Activated T-helper 1 cell treated with anti-CD3 and anti-CD28 coated beads, Interleukin-12 subunit alpha, Interleukin-12 subunit beta, Interleukin-2, Interleukin-4 antibody, amounts not matched to agents 30 ng/mL and 10 ng/mL and 1 ng/mL, durations not matched to agents 14 hours and 24 hours and 36 hours (primary cell): ENCODE measurements at regions of chr10 and their contacts with region 1.

Region 1: DNA sequence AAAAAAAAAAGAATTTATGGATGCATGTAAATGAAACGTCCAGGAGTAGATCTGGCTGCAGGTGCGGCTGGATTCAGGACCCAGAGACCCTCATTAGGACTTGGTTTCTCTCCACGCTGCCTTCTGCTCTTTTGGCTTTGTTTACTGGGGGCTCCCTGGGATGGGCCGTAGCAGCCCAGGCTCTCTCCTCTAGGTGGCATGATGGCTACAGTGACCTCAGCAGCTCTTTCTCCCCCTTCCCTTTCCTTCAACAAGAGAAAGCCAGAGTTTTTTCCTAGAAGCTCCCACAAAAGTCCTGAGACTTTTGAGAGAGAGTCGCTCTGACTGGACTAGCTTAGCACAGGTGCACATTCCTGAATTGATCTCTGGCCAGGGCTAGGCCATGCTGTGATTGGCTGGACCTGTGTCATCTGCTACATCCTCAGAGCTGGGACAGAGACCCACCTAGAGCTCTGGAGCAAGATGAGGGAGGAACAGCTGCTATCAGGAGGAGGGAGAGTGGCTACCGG is 67.8 kb upstream of the PDCD4 start:
- DNase-seq: no peak
- H3K4me3 Mint-ChIP-seq: peak overlapping the region; percentile 56
- H3K27ac Mint-ChIP-seq: peak overlapping the region; percentile 51
- H3K4me1 Mint-ChIP-seq: peaks cover 41% of the 10 kb centered on the region
- H3K27me3 Mint-ChIP-seq: no peaks in the 10 kb centered on the region

Region 2: DNA sequence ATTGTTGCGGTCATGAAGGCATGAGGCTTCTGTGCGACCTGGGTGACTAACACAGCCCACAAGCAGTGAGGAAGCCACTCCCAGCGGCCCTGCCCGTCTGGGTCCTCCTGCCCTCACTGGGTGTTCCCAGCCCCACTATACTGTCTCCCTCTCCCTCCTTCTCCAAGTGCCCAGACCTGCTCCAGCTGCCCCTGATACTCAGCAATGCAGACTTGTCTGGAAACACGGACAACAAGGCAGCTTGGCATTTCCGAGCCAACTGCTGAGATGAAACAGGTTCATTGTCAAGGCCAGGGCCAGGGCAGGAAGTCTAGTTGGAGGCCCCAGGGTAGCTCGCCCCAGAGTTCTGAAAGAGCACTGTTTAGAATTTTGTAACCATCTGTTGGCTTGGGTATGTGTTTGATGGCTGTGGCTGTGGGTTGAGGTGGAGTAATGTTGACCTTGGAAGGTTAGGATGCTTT is 64.0 kb before region 1 on chr10:
- intact Hi-C with region 1: no loop called
- DNase-seq: no peak
- H3K4me3 Mint-ChIP-seq: no peak overlapping the region
- H3K27ac Mint-ChIP-seq: no peak overlapping the region
- H3K4me1 Mint-ChIP-seq: peaks cover 31% of the 10 kb centered on the region
- H3K27me3 Mint-ChIP-seq: peaks cover 9% of the 10 kb centered on the region

Region 3: GRCh38 chr10:110758898-110759297 is 45.0 kb before region 1 on chr10:
- intact Hi-C with region 1: no loop called
- DNase-seq: no peak
- H3K4me3 Mint-ChIP-seq: no peak overlapping the region
- H3K27ac Mint-ChIP-seq: no peak overlapping the region
- H3K4me1 Mint-ChIP-seq: peaks cover 10% of the 10 kb centered on the region
- H3K27me3 Mint-ChIP-seq: peaks cover 5% of the 10 kb centered on the region

Region 4: GRCh38 chr10:110772454-110773025 is 31.3 kb before region 1 on chr10:
- intact Hi-C with region 1: no loop called
- DNase-seq: no peak
- H3K4me3 Mint-ChIP-seq: no peak overlapping the region
- H3K27ac Mint-ChIP-seq: peak overlapping the region; percentile 25
- H3K4me1 Mint-ChIP-seq: peaks cover 45% of the 10 kb centered on the region
- H3K27me3 Mint-ChIP-seq: peaks cover 7% of the 10 kb centered on the region

Region 5: DNA sequence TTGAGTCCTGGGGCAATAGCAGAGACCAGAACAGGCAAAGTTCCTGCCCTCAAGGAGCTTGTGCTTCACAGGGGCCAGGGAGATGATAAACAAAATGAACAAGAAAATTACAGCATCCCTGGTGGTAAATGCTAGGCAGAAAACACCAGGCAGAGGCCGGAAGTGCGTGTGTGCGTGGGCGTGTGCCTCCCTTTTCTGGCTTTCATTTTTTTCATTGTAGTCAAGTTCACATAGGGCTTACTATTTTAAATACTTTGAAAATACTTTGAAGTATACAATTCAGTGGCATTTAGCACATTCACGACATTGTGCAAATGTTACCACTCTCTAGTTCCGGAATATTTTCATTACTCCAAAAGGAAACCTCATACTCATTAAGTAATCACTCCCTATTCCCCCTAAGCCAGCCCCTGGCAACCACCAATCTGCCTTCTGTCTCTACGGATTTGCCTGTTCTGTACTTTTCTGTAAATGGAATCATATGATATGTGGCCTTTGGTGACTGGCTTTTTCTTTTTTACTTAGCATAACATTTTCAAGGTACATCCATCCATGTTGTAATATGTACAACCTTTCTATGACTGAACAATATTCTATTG is 20.3 kb before region 1 on chr10:
- intact Hi-C with region 1: loop called (anchors 2 kb)
- DNase-seq: peak; percentile 55
- H3K4me3 Mint-ChIP-seq: peak overlapping the region; percentile 15
- H3K27ac Mint-ChIP-seq: peak overlapping the region; percentile 84
- H3K4me1 Mint-ChIP-seq: peaks cover 59% of the 10 kb centered on the region
- H3K27me3 Mint-ChIP-seq: no peaks in the 10 kb centered on the region

Region 6: DNA sequence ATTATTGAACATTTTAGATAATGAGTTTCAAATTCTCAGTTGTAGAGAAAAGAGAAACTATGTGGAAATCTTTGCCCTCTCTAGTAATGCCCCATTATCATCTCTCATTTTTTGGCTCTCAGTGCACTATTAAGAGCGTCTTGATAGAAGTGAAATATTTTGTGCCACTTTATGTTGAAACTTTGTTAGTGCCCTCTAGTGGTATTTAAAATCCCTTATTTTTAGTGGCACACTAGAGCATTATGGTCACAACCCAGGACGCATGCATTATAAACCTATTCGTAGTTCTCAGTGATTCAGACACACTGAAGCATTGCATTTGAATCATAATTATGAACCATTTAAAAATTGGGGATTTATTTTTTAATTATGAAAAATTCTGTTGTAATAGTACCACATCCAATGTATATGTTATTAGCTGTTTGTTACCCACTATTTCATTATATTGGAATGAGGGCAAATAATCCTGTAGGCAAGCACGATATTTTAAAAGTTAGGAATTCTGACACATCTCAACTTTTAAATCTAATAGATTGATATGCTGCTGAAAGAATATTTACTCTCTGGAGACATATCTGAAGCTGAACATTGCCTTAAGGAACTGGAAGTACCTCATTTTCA is 89.8 kb after region 1 on chr10:
- intact Hi-C with region 1: loop called (anchors 1 kb)
- DNase-seq: no peak
- H3K4me3 Mint-ChIP-seq: no peak overlapping the region
- H3K27ac Mint-ChIP-seq: no peak overlapping the region
- H3K4me1 Mint-ChIP-seq: peaks cover 6% of the 10 kb centered on the region
- H3K27me3 Mint-ChIP-seq: no peaks in the 10 kb centered on the region